Endothelial cell of umbilical vein (primary cell): ENCODE measurements at regions of chr1 and their contacts with region 1.

Region 1: GRCh38 chr1:76330991-76331603 is 256.6 kb downstream of the ST6GALNAC3 start:
- DNase-seq: peak; percentile 76
- H3K4me3 ChIP-seq: no peak overlapping the region
- H3K27ac ChIP-seq: no peak overlapping the region
- H3K4me1 ChIP-seq: no peaks in the 10 kb centered on the region
- H3K27me3 ChIP-seq: no peaks in the 10 kb centered on the region
- CTCF ChIP-seq: peak; percentile 81 to 91
- POLR2A ChIP-seq: no peak

Region 2: GRCh38 chr1:75841421-75841820 is 489.7 kb before region 1 on chr1:
- CTCF ChIA-PET with region 1: no interaction called
- POLR2A ChIA-PET with region 1: no interaction called
- dilution Hi-C with region 1: no loop called
- intact Hi-C with region 1: no loop called
- DNase-seq: no peak
- H3K4me3 ChIP-seq: no peak overlapping the region
- H3K27ac ChIP-seq: no peak overlapping the region
- H3K4me1 ChIP-seq: no peaks in the 10 kb centered on the region
- H3K27me3 ChIP-seq: no peaks in the 10 kb centered on the region
- CTCF ChIP-seq: no peak
- POLR2A ChIP-seq: no peak

Region 3: GRCh38 chr1:75908717-75909152 is 422.4 kb before region 1 on chr1:
- CTCF ChIA-PET with region 1: interaction called, 3 read pairs
- POLR2A ChIA-PET with region 1: no interaction called
- dilution Hi-C with region 1: no loop called
- intact Hi-C with region 1: loop called (anchors 10 kb)
- DNase-seq: peak; percentile 60
- H3K4me3 ChIP-seq: no peak overlapping the region
- H3K27ac ChIP-seq: no peak overlapping the region
- H3K4me1 ChIP-seq: no peaks in the 10 kb centered on the region
- H3K27me3 ChIP-seq: no peaks in the 10 kb centered on the region
- CTCF ChIP-seq: peak; percentile 30 to 45
- POLR2A ChIP-seq: no peak

Region 4: DNA sequence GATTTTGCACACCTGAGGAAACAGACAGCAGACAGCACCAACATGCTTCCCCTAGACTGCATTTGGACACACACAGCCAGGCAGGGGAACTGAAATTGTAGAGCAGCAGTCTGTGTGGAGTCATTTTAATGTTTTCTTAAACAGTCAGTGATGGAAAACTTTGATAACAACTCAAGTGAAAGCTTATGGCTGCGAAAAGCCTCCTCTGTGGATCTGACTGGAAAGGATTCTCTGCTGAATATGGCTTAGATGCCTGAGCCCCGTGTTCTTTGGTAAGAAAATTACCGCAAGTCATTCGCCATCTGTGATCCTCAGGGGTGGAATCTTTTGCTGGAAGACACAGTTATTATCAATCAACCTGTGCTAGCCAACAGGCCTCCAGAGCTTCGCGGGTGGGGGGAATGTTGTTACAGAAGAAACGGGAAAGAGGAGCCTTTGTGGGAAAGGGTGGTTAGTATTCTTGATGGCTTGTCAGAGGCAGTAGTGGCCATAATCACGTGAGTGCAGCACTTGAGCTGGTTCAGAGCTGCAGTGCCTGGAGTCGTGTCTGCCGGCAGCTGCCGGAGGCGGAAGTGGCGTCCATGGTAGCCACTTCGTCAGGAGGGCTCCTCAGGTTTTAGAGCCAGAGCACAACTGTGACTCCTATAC is 51.9 kb before region 1 on chr1:
- CTCF ChIA-PET with region 1: no interaction called
- POLR2A ChIA-PET with region 1: no interaction called
- dilution Hi-C with region 1: no loop called
- intact Hi-C with region 1: loop called (anchors 1 kb)
- DNase-seq: no peak
- H3K4me3 ChIP-seq: no peak overlapping the region
- H3K27ac ChIP-seq: no peak overlapping the region
- H3K4me1 ChIP-seq: no peaks in the 10 kb centered on the region
- H3K27me3 ChIP-seq: no peaks in the 10 kb centered on the region
- CTCF ChIP-seq: no peak
- POLR2A ChIP-seq: no peak

Region 5: GRCh38 chr1:76463278-76463677 is 132.2 kb after region 1 on chr1:
- CTCF ChIA-PET with region 1: no interaction called
- POLR2A ChIA-PET with region 1: no interaction called
- dilution Hi-C with region 1: no loop called
- intact Hi-C with region 1: no loop called
- DNase-seq: no peak
- H3K4me3 ChIP-seq: no peak overlapping the region
- H3K27ac ChIP-seq: no peak overlapping the region
- H3K4me1 ChIP-seq: no peaks in the 10 kb centered on the region
- H3K27me3 ChIP-seq: no peaks in the 10 kb centered on the region
- CTCF ChIP-seq: no peak
- POLR2A ChIP-seq: no peak

Region 6: DNA sequence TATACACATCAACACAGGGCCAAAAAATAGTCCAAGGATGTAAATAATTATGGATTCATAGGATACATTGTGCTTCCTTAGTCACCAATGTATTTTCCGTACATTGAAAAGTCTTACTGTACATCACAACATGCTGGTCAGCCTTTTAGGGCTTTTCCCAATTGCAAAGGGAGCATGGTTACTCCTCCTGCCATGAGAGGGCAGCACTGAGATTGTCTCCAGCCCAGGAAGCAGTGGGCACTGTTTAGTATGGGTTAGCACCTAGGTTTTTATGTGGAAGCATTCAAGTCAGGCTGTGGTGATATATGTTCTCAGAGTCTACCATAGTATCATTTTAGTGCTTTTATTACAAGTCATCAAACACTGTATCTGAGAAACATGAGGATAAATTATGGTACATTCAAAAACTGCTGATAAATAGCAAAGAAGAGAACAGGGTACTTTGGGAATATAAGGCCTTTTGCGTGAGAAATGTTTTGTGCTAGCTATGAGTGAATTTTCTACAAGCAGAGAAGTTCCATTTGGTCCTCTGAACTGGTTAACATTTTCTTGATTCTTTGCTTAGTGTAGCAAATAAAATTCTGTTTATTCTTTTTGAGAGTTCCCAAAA is 570.2 kb after region 1 on chr1:
- CTCF ChIA-PET with region 1: no interaction called
- POLR2A ChIA-PET with region 1: no interaction called
- dilution Hi-C with region 1: no loop called
- intact Hi-C with region 1: loop called (anchors 1 kb)
- DNase-seq: peak; percentile 41
- H3K4me3 ChIP-seq: no peak overlapping the region
- H3K27ac ChIP-seq: no peak overlapping the region
- H3K4me1 ChIP-seq: no peaks in the 10 kb centered on the region
- H3K27me3 ChIP-seq: no peaks in the 10 kb centered on the region
- CTCF ChIP-seq: peak; percentile 58 to 72
- POLR2A ChIP-seq: no peak